ENCODE measurements at regions of chr17 and their contacts with region 1.

Region 1: GRCh38 chr17:47253541-47254402 is at the start of gene ITGB3:
- DNase-seq: peak; percentile 81 to 91 (median 90)
- ATAC-seq: peak; percentile 98
- H3K4me3 ChIP-seq: peak within 1 kb of the TSS; percentile 57
- H3K27ac ChIP-seq: peak within 1 kb of the TSS; percentile 36; the same call in 2 of the 3 replicates
- H3K4me1 ChIP-seq: peaks cover 28 to 34% of the 10 kb centered on the region in 2 experiments
- H3K27me3 ChIP-seq: no peaks in the 10 kb centered on the region
- CTCF ChIP-seq: peak; percentile 49 to 86 (median 68)
- EP300 ChIP-seq: no peak
- POLR2A ChIP-seq: peak; percentile 42; the same call in 1 of the 2 replicates
- RAD21 ChIP-seq: peak in 1 of 2 experiments; percentile 66; a peak in 3 of 4 replicates
- polyA plus RNA-seq, gene ITGB3: 0.08 TPM in 1 of 2 experiments, not detected in the other

Region 2: DNA sequence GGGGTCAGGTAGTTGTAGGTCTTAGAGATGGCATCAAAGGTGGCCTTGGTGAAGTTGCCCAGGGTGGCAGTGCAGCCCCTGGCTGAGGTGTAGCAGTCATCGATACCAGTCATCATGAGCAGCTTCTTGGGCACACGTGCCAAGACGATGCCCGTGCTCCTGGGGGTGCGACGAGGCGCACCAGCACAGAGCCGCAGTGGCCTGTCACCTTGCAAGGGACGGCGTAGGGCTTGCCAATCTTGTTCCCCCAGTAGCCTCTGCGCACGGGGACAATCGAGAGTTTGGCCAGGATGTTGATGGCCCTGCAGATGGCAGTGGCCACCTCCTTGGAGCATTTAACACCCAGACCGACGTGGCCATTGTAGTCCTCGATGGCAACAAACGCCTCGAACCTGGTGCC is 94.5 kb before region 1 on chr17:
- CTCF ChIA-PET with region 1: no interaction called
- POLR2A ChIA-PET with region 1: no interaction called
- in situ Hi-C with region 1: no loop called
- intact Hi-C with region 1: no loop called
- DNase-seq: no peak
- ATAC-seq: no peak
- H3K4me3 ChIP-seq: no peak overlapping the region
- H3K27ac ChIP-seq: no peak overlapping the region
- H3K4me1 ChIP-seq: peaks cover 0 to 3% of the 10 kb centered on the region in 2 experiments; a peak in 1 of 5 replicates
- H3K27me3 ChIP-seq: no peaks in the 10 kb centered on the region
- CTCF ChIP-seq: no peak
- EP300 ChIP-seq: no peak
- POLR2A ChIP-seq: no peak
- RAD21 ChIP-seq: no peak

Region 3: DNA sequence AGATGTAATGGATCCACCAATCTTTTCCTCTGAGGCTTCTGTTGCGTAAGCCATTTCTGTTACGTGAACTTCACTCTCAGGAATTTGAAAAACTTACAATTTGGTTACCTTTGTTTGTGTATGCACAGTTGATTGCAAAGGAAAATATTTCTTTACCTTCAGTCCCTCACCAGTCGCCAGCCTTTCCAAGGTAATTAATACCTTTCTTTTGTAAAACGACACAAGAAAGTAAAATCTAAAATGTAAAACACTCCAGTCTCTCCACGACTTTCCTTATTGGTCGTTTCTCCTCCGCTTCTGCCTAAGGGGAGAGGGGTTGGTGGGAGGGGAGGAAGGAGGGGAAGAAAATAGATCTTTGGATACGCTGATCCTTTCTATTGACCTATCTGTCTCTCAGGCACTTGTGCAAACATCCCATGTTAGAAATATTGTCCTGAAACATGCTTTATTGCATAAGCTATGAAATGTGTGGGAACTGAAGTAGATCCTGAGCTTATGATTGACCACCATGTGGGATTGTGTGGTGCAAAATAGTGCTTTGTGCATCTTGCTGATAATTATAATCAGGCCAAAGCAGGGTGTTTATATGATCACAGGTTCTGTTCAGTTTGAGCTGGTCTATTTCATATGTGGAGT is 37.6 kb after region 1 on chr17:
- CTCF ChIA-PET with region 1: no interaction called
- POLR2A ChIA-PET with region 1: interaction called, 5 read pairs
- in situ Hi-C with region 1: no loop called
- intact Hi-C with region 1: loop called (anchors 5 kb)
- DNase-seq: peak in 2 of 4 experiments; percentile 39 to 69
- ATAC-seq: peak; percentile 4
- H3K4me3 ChIP-seq: no peak overlapping the region
- H3K27ac ChIP-seq: peak overlapping the region; percentile 50
- H3K4me1 ChIP-seq: peaks cover 54 to 66% of the 10 kb centered on the region in 2 experiments
- H3K27me3 ChIP-seq: no peaks in the 10 kb centered on the region
- CTCF ChIP-seq: no peak
- EP300 ChIP-seq: peak; percentile 81
- POLR2A ChIP-seq: no peak
- RAD21 ChIP-seq: no peak

Region 4: GRCh38 chr17:47315451-47316266 is 61.9 kb after region 1 on chr17:
- CTCF ChIA-PET with region 1: interaction called, 3 read pairs
- POLR2A ChIA-PET with region 1: no interaction called
- in situ Hi-C with region 1: no loop called
- intact Hi-C with region 1: loop called (anchors 1 kb)
- DNase-seq: peak; percentile 55 to 80 (median 68)
- ATAC-seq: peak; percentile 94
- H3K4me3 ChIP-seq: no peak overlapping the region
- H3K27ac ChIP-seq: no peak overlapping the region
- H3K4me1 ChIP-seq: peaks cover 3 to 6% of the 10 kb centered on the region in 2 experiments; a peak in 2 of 5 replicates
- H3K27me3 ChIP-seq: no peaks in the 10 kb centered on the region
- CTCF ChIP-seq: peak; percentile 75 to 93 (median 81)
- EP300 ChIP-seq: no peak; the same call in 1 of the 2 replicates
- POLR2A ChIP-seq: no peak
- RAD21 ChIP-seq: peak; percentile 99 to 100